Activated B cell treated with CpG ODN at 0.5 μM for 24 hours (primary cell): ENCODE measurements at regions of chr17 and their contacts with region 1.

Region 1: DNA sequence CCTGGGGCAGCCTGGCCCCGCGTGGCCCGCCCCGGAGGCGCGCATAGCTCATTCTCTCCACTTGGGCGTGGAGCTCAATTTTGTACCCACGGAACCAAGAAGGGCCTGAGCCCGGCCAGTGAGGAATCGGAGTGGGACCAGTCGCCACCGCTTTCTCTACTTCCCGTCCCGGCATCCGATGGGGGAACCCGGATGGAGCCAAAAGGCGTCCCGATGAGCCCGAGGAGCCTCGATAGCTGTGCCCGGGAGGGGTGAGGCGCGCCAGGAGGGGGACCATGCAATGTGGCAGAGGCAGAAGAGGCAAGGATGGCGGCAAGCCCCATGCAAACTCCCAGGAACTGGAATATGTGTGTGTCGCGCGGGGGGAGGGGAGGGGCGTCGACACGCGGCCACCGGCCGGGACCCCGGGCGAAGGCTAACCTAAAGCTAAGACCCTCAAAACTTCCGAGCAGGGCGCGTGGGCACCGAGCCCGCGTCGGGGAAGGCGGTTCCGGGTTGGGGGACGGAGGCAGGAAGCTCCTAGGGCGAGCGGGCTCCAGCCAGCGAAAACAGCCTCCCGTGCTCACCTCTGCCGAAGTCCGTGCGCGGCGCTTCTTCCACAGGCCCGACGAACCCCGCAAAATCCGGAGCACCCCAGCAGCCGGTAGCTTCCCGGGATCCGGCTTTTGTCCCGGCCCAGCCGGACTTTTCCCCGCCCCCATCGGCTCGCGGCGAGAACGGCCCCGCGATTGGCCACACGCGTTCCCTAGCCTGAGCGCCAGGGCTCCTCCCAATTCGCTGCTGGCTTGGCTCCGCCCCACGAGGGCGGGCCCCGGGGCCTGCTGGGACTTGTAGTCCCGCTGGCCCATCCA is at the start of gene ACLY:
- DNase-seq: peak; percentile 96
- ATAC-seq: peak; percentile 99
- H3K4me3 Mint-ChIP-seq: peak within 1 kb of the TSS; percentile 92
- H3K27ac Mint-ChIP-seq: peak within 1 kb of the TSS; percentile 84
- H3K4me1 Mint-ChIP-seq: peaks cover 31% of the 10 kb centered on the region
- H3K27me3 Mint-ChIP-seq: no peaks in the 10 kb centered on the region
- CTCF ChIP-seq: no peak
- total RNA-seq, gene ACLY: 133 and 143 TPM in 2 replicates

Region 2: DNA sequence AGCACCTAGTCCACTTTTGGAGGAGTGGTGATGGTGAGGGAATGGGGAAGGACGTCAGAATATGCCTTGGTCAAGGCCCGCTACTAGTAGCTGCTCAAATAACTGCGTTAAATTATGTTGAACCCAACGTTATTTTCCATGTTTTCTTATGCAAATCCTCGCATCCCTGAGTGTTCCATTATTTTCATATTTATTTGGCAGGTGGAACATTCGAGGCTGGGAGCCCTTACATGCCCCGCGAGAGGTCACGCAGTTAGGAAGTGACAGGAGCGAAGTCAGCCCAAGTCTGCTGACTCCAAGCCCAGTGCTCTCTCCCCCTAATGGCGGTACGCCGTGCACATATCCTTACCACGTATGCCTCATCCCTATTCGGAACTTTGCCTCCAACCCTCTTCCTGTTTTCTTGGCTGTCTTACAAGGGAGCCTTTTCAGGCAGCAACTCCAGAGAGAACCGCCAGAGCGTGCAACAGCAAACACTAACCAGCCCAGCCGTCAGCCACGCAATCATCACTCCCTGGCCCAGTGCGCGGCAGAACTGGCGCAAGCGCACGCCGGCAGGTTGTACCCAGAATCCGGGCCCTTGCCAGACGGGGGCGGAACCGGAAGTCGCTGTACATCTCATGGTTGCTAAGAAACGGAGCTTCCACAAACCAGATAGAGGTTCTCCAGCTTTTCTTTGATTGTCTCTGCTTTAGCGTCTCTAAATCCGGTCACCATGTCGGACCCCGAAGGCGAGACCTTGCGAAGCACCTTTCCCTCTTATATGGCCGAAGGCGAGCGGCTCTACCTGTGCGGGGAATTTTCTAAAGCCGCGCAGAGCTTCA is 11.7 kb after region 1 on chr17 and contains the start of gene ODAD4:
- CTCF ChIA-PET with region 1: interaction called, 3 read pairs
- POLR2A ChIA-PET with region 1: interaction called, 50 read pairs
- intact Hi-C with region 1: loop called (anchors 1 kb)
- DNase-seq: peak; percentile 89
- ATAC-seq: peak; percentile 98
- H3K4me3 Mint-ChIP-seq: peak within 1 kb of the TSS; percentile 94
- H3K27ac Mint-ChIP-seq: peak within 1 kb of the TSS; percentile 97
- H3K4me1 Mint-ChIP-seq: peaks cover 38% of the 10 kb centered on the region
- H3K27me3 Mint-ChIP-seq: no peaks in the 10 kb centered on the region
- CTCF ChIP-seq: no peak
- total RNA-seq, gene ODAD4: 0.56 and 1.1 TPM in 2 replicates

Region 3: DNA sequence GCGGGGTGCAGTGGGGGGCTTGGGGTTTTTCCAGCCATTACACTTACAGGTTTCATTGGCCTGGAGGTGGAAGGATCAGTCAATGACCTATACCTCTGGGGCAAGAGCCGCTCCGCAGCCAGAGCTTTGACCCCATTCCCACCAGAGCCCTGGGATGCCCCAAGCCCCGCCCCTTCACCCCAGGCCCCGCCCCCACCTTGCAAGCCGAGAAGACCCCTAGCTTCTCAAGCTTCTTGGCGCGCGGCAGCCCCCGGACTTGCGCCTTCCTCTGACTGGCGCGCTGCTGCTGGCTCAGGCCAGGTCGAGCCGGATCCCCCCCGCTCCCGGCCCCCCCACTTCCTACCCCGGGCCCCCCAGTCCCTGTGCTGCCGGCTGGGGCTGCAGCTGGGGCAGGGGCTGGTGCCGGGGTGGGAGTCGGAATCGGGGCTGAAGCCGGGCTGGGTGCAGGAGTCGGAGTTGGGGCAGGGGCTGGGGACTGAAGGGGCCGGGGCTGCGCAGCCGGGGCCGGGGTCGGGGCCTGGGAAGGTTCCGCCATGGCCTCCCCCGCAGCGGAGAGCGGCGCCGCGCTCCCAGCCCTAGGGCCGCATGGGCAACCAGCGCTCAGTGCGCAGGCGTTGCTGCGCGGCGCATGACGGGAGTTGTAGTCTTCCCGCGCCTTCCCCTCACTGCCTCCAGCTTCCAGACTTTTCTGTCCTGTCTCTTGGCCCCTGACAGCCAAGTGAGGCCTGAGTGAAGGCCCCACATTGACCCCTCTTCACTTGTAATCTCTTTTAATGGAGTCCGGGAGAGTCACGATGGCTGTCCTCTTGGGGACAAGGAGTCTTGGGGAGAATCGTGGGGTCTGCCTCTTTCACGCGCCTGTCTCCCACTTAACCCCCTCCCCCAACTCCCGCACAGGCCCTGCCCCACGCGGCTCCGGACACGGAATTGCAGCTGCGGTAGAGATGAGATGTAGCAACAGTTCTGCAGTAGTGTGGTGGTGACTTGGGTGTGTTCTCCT is 202.5 kb after region 1 on chr17 and contains the start of gene KAT2A:
- CTCF ChIA-PET with region 1: no interaction called
- POLR2A ChIA-PET with region 1: interaction called, 4 read pairs
- intact Hi-C with region 1: loop called (anchors 2 kb)
- DNase-seq: peak; percentile 76
- ATAC-seq: peak; percentile 89
- H3K4me3 Mint-ChIP-seq: peak within 1 kb of the TSS; percentile 71
- H3K27ac Mint-ChIP-seq: peak within 1 kb of the TSS; percentile 30
- H3K4me1 Mint-ChIP-seq: peaks cover 32% of the 10 kb centered on the region
- H3K27me3 Mint-ChIP-seq: no peaks in the 10 kb centered on the region
- CTCF ChIP-seq: no peak
- total RNA-seq, gene KAT2A: 33.4 and 40.1 TPM in 2 replicates